Heart left ventricle (tissue), 16 donors: ENCODE measurements at regions of chr12 and their contacts with region 1.

Region 1: DNA sequence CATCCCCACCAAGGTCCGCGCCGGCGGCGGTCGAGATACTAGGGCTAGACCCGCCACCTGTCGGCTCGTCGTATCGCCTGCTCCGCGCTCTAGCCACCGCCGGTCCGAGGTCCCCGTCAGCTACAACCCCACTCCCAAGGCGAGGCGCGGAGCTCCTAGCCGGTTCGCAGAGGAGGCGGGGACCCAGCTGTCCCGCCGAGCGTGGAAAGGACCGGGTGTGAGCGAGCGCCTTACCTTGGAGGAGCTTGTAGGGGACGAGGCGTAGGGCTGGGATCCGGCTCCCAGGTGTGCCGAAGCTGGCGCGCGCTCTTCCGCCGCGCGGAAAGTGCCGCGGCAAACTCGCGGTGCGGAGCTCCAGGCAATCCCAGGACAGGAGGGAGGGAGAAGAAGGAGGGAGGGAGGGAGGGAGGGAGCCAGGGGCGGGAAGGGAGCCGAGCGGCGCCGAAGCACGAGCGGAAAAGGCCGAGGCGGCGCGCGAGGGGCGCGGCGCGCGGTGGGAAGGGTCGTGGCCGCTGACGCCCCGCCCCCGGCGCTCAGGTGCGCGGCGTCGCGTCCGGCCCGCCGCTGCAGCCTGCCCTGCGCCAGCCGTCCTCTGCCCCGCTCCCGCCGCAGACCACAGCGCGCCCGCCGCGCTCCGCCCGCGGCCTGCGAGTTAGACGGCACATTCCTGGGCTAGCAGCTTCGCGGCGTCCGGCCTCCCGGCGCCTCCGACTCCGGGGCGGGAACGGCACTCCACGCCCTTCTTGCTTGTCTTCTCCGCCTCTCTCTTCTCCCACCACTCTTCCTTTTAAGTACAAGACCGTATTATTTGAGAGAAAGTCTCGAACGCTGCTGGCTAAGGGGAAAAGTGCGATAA is at the start of gene PAWR:
- DNase-seq: peak; percentile 43 to 82 (median 60)
- ATAC-seq: peak; percentile 52 to 81 (median 72)
- H3K4me3 ChIP-seq: peak within 1 kb of the TSS; percentile 60 to 99 (median 89)
- H3K27ac ChIP-seq: peak within 1 kb of the TSS; percentile 53 to 87 (median 70)
- H3K4me1 ChIP-seq: peaks cover 0 to 30% (median 7%) of the 10 kb centered on the region in 12 donors
- H3K27me3 ChIP-seq: peaks cover 0 to 44% (median 0%) of the 10 kb centered on the region in 9 donors
- CTCF ChIP-seq: peak in 3 of 12 donors; percentile 13 to 27 (median 15)
- POLR2A ChIP-seq: no peak
- total RNA-seq, gene PAWR: 4.8 to 29.0 (median 11.4) TPM

Region 2: DNA sequence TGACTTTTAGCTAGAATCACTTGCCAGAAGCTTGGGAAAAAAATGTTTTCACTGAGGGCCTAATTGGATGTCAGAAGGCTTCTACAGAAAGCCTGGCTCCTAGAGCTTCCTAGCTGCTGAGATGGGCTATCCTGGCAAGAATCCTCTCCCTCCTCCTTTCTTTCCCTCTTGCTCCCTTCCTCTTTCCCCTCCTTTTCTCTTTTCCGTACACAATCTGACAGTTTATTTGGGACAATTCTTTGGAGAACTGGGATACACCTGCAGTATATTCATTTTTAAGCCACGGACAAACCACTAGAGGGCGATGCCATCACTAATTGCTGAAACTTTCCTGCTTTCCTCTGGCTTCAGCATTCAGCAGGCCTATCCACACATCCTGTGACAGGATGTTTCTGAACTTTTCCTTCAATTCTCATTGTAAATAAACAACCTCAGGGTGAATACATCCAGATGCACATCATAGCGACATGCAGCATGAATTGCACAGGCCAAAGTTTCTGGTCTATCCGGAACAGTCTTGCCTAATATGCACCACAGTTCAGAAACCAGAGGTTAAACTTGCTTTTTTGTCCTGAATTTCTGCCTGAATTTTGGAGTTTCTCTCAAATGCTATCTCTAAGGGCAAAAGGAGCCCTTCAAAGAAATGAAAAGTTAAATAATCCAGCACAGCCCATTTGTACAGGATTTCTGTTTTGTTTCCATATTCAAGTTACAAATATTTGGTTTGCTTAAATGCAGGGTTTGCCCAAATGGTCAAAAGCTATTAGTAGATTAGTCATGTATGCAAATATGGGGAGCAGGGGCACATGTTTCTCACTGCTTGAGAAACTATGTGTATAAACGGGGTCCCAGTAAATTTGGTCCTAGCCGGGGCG is 142.9 kb before region 1 on chr12:
- intact Hi-C with region 1: loop called in 1 of 10 experiments (anchors 5 kb)
- DNase-seq: peak in 1 of 5 donors; percentile 34
- ATAC-seq: peak in 3 of 4 donors; percentile 59 to 75 (median 73)
- H3K4me3 ChIP-seq: no peak overlapping the region
- H3K27ac ChIP-seq: peak overlapping the region in 4 of 12 donors; percentile 2 to 8 (median 6)
- H3K4me1 ChIP-seq: peaks cover 0 to 22% (median 6%) of the 10 kb centered on the region in 12 donors
- H3K27me3 ChIP-seq: no peaks in the 10 kb centered on the region
- CTCF ChIP-seq: peak; percentile 52 to 81 (median 65)
- POLR2A ChIP-seq: no peak

Region 3: DNA sequence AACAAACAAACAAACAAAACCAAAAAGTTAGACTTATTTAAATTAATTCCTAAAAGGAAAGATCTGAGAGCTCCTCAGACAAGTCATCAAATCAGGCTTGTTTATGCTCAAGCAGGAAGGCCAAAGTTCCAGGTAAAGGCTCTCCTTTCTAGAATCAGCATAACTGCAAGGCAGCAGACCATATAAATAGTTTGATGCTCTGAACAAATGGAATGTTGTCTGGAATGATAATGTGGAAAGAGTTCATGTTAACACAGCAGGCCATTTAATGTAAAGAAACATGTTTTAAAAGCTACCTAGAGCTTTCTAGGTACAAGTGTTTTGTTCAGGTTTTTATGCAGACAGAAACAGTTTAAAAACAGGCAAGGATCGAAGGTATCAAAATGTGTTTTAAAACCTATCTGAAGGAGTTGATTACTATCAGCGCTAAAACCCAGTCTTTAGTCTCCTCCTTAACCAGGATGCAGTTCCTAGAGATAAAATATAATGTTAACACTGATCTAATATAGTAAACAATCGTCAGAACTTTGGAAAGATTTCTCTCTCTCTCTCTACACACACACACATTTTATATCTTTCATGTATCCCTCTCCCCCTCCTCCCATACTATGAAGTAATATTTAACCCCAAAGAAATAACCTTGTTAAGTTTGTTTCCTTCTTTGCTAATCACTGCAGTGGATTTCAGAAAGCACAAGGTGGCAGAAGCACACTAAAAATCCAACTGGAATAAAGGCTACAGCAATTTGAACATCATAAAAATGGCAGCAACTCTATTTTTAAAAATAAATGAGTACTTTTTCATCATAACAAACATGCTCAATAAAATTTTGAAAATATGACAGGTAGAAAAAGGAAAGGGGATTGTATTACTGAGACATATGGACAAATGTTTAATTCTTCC is 135.6 kb before region 1 on chr12:
- intact Hi-C with region 1: loop called in 4 of 10 experiments (anchors 2 to 5 kb)
- DNase-seq: no peak
- ATAC-seq: peak in 1 of 4 donors; percentile 45
- H3K4me3 ChIP-seq: no peak overlapping the region
- H3K27ac ChIP-seq: peak overlapping the region in 1 of 12 donors; percentile 38
- H3K4me1 ChIP-seq: peaks cover 0 to 45% (median 7%) of the 10 kb centered on the region in 12 donors
- H3K27me3 ChIP-seq: no peaks in the 10 kb centered on the region
- CTCF ChIP-seq: peak; percentile 31 to 80 (median 62)
- POLR2A ChIP-seq: no peak

Region 4: DNA sequence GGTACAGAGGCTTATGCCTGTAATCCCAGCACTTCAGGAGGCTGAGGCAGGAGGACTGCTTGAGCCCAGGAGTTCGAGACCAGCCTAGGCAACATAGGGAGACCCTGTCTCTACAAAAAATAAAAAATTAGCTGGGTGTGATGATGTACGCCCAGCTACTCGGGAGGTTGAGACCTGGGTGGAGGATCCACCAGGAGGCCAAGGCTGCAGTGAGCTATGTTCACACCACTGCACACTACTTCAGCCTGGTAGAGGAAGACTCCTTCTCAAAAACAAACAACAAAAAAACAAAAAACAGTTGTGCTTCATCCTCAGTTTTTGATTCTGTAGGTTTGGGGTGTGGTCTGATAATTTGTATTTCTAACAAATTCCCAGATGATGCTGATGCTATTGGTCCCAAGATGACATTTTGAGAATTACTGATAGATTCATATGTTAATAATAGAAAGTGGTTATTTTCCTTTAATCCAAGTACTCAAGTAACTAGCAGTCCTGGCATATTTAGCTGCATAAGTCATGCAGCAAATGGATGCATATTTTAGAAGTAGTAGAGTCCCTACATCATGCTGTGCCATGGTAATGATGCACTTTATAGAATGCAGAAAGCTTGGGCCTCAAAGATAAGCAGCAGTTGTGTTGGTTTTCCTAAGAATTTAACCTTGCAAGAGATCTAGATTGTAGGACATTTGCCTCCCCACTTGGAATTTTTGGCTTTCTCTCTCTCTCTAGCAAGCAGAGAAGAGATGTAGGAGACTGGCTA is 76.0 kb after region 1 on chr12:
- intact Hi-C with region 1: no loop called
- DNase-seq: no peak
- ATAC-seq: no peak
- H3K4me3 ChIP-seq: no peak overlapping the region
- H3K27ac ChIP-seq: no peak overlapping the region
- H3K4me1 ChIP-seq: peaks cover 0 to 12% (median 3%) of the 10 kb centered on the region in 12 donors
- H3K27me3 ChIP-seq: no peaks in the 10 kb centered on the region
- CTCF ChIP-seq: no peak
- POLR2A ChIP-seq: no peak

Region 5: DNA sequence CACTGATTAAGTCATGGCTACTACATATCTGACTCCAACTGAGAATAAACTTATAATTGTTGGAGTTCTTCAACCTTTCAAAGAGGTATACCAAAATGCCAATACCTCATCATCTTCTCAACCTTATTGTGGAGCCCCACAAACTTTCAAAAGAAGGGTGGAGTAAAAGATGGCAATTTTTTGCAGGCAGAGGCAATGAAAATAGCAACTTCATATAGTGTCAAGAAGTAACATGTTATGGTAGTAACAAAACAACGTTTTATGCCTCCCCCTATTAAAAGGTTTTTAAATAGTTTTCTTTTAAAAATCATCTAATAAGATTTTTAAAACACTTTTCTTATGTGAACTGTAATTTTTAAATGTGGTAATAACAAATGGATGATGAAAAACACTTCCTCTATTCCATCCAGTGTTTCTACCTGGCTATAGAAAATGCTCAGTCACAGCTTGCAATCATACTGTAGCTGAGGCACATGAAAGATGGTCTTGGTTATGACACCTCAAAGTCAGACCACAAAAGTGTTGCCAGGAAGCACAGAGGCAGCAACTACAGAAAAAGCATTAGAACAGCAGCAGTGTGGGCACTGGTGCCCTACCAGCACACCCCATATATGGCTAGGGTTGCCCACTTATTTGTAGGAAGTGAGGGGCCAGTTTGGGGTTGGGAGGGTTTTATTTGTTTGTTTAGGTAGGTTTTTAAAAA is 237.1 kb after region 1 on chr12:
- intact Hi-C with region 1: loop called in 3 of 10 experiments (anchors 5 to 10 kb)
- DNase-seq: no peak
- ATAC-seq: peak in 2 of 4 donors; percentile 28 to 42
- H3K4me3 ChIP-seq: no peak overlapping the region
- H3K27ac ChIP-seq: peak overlapping the region in 2 of 12 donors; percentile 22 to 48
- H3K4me1 ChIP-seq: peaks cover 0 to 77% (median 49%) of the 10 kb centered on the region in 12 donors
- H3K27me3 ChIP-seq: no peaks in the 10 kb centered on the region
- CTCF ChIP-seq: no peak
- POLR2A ChIP-seq: no peak

Region 6: GRCh38 chr12:80033448-80033847 is 342.6 kb after region 1 on chr12:
- intact Hi-C with region 1: no loop called
- DNase-seq: no peak
- ATAC-seq: peak in 3 of 4 donors; percentile 42 to 67 (median 64)
- H3K4me3 ChIP-seq: no peak overlapping the region
- H3K27ac ChIP-seq: peak overlapping the region in 3 of 12 donors; percentile 13 to 70 (median 14)
- H3K4me1 ChIP-seq: peaks cover 0 to 12% (median 0%) of the 10 kb centered on the region in 12 donors
- H3K27me3 ChIP-seq: no peaks in the 10 kb centered on the region
- CTCF ChIP-seq: no peak
- POLR2A ChIP-seq: no peak